Testis (tissue), 5 donors: ENCODE measurements at regions of chr2 and their contacts with region 1.

Region 1: DNA sequence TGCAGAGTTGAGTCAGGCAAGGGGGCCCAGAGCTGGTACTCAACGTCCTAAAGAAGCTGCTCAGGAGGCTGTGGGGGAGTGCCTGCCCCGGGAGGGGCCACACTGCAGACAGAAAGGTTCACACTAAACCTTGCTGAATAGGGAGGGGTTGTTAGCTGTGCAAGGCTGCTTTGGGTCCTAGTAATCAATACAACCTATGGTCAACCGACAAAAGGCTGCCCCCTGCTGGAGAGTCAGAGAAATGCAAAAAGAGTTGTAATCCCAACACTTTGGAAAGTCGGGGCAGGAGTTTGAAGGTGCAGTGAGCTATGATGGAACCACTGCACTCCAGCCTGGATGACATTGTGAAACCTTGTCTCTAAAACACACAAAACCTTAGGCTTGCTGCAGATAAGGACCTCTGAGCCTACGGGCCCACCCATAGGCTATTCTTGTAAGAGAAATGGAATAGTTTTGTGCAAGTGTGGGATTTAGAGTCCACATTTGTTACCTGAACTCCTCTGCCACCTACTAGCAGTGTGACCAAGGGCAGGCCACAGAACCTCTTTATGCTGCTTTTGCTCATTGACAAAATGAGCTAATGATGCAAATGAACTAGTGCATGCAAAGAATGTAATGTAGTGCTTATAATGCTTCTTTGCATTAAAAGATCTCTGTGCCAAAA is 81.5 kb downstream of the PRPF40A start:
- DNase-seq: peak; percentile 66
- H3K4me3 ChIP-seq: no peak overlapping the region
- H3K27ac ChIP-seq: no peak overlapping the region
- H3K4me1 ChIP-seq: peaks cover 4% of the 10 kb centered on the region
- H3K27me3 ChIP-seq: no peaks in the 10 kb centered on the region
- CTCF ChIP-seq: peak; percentile 75 to 91 (median 78)
- POLR2A ChIP-seq: no peak

Region 2: DNA sequence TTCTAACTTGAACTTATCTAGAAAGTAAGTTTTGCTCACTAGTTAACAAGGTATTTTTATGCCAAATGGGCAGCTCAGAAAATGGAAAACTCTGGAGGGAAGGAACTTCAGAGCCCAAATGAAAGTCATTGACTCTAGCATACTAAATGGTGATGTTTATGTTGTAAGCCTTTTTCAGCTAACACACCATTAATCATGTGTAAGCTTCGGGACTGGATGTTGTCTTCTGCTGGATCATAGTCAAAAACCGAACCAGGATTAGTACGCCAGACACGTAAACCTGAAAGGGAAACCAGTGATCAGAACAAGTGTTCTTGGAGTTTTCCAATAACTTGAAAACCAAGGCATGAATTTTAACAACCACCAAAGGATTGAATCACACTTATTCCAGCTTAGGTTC is 1144.3 kb before region 1 on chr2:
- intact Hi-C with region 1: no loop called
- DNase-seq: no peak
- H3K4me3 ChIP-seq: no peak overlapping the region
- H3K27ac ChIP-seq: no peak overlapping the region
- H3K4me1 ChIP-seq: no peaks in the 10 kb centered on the region
- H3K27me3 ChIP-seq: no peaks in the 10 kb centered on the region
- CTCF ChIP-seq: no peak
- POLR2A ChIP-seq: no peak

Region 3: DNA sequence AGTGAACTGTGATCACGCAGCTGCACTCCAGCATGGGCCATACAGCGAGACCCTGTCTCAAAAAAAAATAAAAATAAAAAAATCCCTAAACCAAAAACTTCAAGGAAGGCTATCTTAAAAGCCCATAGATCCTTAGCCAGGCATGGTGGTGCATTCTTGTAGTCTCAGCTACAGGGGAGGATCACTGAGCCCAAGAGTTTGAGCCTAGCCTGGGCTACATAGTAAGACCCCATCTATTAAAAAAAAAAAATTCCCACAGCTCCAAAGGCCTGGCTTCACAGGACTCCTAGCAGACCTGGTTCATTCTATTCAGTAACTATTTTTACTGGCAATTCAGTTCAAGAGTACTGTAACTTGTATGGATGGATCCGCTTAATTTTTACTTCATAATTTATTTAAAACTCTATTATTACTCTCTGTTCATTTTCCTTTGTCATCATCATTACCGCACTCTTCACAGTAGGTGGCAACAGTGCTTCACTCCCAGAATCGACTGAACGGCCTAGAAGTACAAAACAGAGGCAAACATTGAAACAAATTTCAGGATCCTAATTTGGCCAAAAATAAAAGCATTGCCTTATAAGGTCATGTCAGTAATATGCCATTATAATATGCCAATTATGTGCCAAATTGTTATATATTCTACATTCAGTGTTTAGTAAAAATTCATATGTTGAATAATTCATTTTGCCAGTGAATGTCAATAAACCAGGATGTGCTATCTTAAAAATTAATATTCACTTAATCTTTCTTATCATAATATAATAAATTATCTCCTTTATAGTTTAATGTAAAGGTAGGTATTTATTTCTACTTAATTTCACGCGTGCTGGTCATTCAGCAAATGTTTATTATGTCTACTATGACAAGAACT is 445.9 kb before region 1 on chr2:
- intact Hi-C with region 1: loop called (anchors 5 kb)
- DNase-seq: peak; percentile 62
- H3K4me3 ChIP-seq: no peak overlapping the region
- H3K27ac ChIP-seq: no peak overlapping the region
- H3K4me1 ChIP-seq: no peaks in the 10 kb centered on the region
- H3K27me3 ChIP-seq: no peaks in the 10 kb centered on the region
- CTCF ChIP-seq: peak; percentile 64 to 75 (median 74)
- POLR2A ChIP-seq: no peak

Region 4: GRCh38 chr2:152694161-152694661 is 58.4 kb after region 1 on chr2:
- intact Hi-C with region 1: no loop called
- DNase-seq: no peak
- H3K4me3 ChIP-seq: no peak overlapping the region
- H3K27ac ChIP-seq: no peak overlapping the region
- H3K4me1 ChIP-seq: no peaks in the 10 kb centered on the region
- H3K27me3 ChIP-seq: no peaks in the 10 kb centered on the region
- CTCF ChIP-seq: no peak
- POLR2A ChIP-seq: no peak